HEK293 (cell line): ENCODE measurements at regions of chr1 and their contacts with region 1.

Region 1: DNA sequence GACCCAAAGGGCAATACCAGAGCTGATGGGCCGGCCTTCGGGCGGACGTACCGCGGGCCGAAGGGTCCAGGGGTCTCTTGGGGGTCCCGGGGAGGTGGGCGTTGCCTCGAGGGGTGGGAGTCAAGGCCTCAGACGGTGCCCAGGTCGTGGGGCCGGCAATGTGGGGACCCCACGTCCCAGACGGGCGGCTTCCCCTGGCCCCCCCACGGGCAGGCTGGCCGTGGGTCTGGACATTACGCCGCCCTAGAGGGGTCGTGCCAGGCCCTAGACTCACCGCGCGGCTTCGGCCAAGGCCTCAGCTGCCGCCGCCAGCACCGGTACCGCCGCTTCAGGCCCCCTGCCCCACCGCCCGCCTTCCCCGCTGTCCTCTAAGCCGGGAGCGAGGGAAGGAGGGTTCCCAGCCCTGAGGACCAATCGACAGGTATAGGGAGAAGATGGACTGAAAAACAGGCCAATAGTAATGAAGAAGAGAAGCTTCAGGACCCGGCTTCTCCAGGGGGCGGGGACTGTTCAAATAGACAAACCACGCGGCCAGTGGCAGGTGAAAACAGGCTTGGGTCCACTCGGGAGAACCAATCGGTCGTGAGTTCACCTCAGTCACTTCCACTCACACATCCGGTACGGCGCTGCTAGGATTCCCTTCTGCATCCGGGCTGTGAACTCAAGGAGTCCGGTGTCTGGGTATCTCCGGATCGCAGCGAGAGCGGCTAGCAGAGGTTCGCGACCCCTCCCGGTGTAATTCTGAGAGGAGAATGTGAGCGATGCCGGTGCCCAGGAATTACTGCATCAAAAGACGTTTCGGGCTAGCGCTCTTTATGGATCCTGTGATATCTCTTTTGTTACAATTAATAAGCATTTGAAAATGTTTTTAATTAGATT is at the start of gene MTOR:
- H3K4me3 ChIP-seq: peak within 1 kb of the TSS; percentile 99
- H3K27ac ChIP-seq: peak within 1 kb of the TSS; percentile 61; the same call in 1 of the 2 replicates
- H3K4me1 ChIP-seq: no peaks in the 10 kb centered on the region
- CTCF ChIP-seq: peak; percentile 7; the same call in 1 of the 2 replicates

Region 2: GRCh38 chr1:11272832-11273594 is 10.6 kb after region 1 on chr1 and contains the start of gene UBIAD1:
- CTCF ChIA-PET with region 1: interaction called, 13 read pairs
- POLR2A ChIA-PET with region 1: interaction called, 49 read pairs
- H3K4me3 ChIP-seq: peak within 1 kb of the TSS; percentile 88
- H3K27ac ChIP-seq: peak within 1 kb of the TSS; percentile 69
- H3K4me1 ChIP-seq: peaks cover 2% of the 10 kb centered on the region; the same call in 1 of the 2 replicates
- CTCF ChIP-seq: no peak